ENCODE measurements at regions of chr5 and their contacts with region 1.

Region 1: DNA sequence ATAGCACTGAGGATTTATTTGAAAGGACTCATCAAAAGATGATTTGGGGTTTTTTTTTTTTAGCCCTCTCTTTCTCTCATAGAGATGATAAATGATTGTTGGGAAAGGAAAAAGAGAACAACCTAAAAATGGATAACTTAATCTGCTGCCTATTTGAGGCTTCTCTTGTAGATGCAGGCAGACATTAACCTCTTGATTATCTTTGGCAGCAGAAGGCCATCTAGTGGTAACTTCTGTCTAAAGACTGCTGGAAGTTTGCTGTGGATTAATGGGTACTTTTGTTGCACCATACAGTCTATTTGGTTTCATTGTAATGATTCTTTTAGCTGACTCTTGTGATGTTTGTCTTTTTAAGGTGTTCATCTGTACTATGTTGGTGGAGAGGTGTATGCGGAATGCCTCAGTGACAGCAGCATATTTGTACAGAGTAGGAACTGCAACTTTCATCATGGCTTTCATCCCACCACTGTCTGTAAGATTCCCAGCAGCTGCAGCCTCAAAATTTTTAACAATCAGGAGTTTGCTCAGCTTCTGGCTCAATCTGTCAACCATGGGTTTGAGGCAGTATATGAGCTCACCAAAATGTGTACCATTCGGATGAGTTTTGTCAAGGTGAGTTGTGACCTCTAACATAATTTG is 18.8 kb downstream of the SMIM32 start:
- DNase-seq: no peak
- ATAC-seq: no peak
- H3K4me3 Mint-ChIP-seq: no peak overlapping the region
- H3K27ac Mint-ChIP-seq: no peak overlapping the region
- H3K4me1 Mint-ChIP-seq: no peaks in the 10 kb centered on the region
- H3K27me3 Mint-ChIP-seq: no peaks in the 10 kb centered on the region
- CTCF ChIP-seq: no peak

Region 2: DNA sequence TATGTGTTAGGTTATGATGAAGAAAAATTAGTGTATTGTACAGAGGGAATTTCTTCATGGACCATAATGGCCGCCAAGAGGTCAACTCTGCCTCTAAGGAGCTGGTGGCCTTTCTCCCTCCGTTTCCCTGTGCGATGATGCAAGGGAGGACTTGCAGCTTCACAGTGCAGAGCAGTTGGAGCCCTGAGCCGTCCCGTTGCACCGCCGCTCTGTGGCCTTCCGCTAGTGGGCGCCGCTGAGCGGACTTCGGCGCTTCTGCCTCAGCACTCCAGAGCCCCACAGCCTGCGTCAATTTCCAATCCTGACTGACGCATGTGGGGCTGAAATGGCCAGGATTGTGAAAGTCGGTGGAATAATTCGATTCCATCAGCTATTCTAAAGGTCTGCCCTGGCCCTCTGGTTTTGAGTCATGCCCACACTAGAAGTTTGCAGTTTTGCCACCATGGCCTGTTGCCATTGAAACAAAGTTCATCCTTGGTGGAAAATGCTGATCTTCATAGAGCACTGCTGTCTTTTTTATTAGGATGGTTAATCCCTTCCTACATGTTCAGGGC is 196.7 kb before region 1 on chr5:
- CTCF ChIA-PET with region 1: no interaction called
- POLR2A ChIA-PET with region 1: no interaction called
- intact Hi-C with region 1: loop called (anchors 1 kb)
- DNase-seq: no peak
- ATAC-seq: no peak
- H3K4me3 Mint-ChIP-seq: no peak overlapping the region
- H3K27ac Mint-ChIP-seq: no peak overlapping the region
- H3K4me1 Mint-ChIP-seq: no peaks in the 10 kb centered on the region
- H3K27me3 Mint-ChIP-seq: peaks cover 48% of the 10 kb centered on the region
- CTCF ChIP-seq: no peak

Measured in activated B cell treated with CpG ODN at 0.5 μM for 24 hours (primary cell).